ENCODE measurements at regions of chr12 and their contacts with region 1.

Region 1: GRCh38 chr12:122421821-122422729 is at the start of gene CLIP1:
- DNase-seq: peak; percentile 80 to 92
- ATAC-seq: peak; percentile 79 to 84 (median 82)
- H3K4me3 ChIP-seq: peak within 1 kb of the TSS; percentile 75
- H3K27ac ChIP-seq: peak within 1 kb of the TSS; percentile 97
- H3K4me1 ChIP-seq: peaks cover 34% of the 10 kb centered on the region
- H3K27me3 ChIP-seq: no peaks in the 10 kb centered on the region
- CTCF ChIP-seq: peak; percentile 47
- total RNA-seq, gene CLIP1: 458 to 639 (median 574) TPM

Region 2: DNA sequence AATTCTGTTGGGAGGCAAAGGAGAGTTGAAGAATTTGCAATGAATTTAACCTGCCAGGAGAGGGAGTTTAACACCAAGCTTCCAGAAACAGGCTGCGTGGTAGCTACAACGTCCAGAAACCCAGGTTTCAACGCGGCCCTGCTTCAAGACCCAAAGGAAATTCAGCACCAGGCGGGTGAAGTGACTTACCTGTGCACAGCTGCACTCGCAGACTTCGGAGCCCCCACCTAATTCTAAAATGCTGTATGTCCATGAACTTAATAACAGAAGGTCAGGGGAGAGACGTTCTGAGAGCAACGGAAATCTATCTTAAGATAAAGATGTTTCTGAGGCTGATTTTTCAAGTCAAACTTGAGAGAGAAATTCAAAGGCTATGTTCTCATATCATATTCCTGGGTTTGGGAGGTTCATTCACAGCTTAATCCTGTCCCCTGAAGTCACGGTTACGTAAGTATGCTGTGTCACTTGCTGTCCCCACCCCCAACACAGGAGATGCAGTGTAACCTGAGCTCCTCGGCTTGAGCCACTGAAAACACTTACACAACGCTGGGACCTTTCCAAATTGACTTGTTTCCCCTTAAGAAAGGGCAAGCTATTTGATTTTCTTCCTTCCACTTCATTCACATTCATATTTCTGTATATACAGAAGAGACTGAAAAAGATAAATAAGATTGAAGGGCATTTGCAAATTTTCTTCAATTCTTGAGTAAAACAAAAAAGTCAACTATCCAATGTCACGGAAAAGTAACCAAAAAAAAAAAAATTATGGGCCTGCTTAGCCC is 22.3 kb before region 1 on chr12:
- intact Hi-C with region 1: loop called (anchors 1 to 2 kb)
- DNase-seq: peak; percentile 77 to 88
- ATAC-seq: peak; percentile 83 to 90 (median 85)
- H3K4me3 ChIP-seq: peak overlapping the region; percentile 71
- H3K27ac ChIP-seq: peak overlapping the region; percentile 94
- H3K4me1 ChIP-seq: peaks cover 57% of the 10 kb centered on the region
- H3K27me3 ChIP-seq: no peaks in the 10 kb centered on the region
- CTCF ChIP-seq: peak; percentile 63

Region 3: DNA sequence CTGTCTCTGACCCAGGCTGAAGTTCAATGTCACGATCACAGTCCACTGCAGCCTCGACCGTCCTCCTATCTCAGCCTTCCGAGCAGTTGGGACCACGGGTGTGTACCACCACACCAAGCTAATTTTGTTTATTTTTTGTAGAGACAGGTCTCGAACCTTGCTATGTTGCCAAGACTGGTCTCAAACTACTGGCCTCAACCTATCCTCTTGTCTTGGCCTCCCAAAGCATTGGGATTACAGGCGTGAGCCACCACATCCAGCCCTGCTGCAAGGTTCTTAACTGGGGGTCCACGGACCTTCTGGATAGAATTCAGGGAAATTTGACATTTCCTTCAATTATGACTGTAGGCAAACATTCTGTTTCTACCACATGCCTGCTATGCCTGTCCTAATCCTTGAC is 41.7 kb after region 1 on chr12:
- intact Hi-C with region 1: loop called in 1 of 2 experiments (anchors 5 kb)
- DNase-seq: no peak
- ATAC-seq: peak in 2 of 4 donors; percentile 9 to 15
- H3K4me3 ChIP-seq: no peak overlapping the region
- H3K27ac ChIP-seq: peak overlapping the region; percentile 46
- H3K4me1 ChIP-seq: peaks cover 5% of the 10 kb centered on the region
- H3K27me3 ChIP-seq: no peaks in the 10 kb centered on the region
- CTCF ChIP-seq: no peak

Region 4: DNA sequence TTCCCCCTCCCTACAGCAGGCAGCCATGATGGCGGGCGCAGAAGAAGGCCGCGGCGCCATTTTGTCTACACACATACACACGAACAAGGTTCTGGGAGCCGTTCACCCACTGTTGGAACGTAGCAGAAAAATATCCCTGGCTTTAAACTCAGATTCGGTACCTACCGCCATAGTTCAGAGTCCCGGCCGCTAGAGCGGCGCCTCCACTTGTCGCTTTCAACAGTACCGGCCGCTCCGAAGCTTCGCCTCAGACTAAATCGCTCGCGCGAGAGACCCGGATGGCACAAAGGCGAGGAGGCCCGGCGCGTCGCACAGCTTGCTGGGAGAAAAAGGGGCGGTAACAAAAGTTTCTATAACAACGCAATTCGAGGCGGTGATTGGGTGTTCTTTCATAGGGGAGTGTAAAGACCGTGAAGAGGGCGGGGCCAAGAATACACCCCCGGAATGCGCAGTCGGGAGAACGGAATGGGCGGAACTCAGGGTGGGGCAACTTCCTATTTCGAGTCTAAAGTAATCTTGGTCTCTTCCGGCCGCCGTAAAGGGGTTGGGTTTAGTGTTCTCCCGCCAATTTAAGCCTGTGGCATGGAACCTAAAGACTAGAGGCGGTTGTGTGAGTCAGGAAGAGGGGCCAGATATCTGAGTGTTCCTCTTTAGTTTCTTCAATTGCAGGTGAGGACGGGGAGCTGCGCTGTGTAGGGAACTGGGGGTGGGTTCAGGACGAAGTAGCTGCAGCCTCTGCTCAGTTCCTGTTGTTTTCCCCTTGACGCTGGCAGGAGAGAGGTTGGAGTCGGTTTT is 104.8 kb after region 1 on chr12 and contains the starts of genes KNTC1 and RSRC2:
- intact Hi-C with region 1: no loop called
- DNase-seq: peak; percentile 95 to 98
- ATAC-seq: peak; percentile 93 to 98 (median 97)
- H3K4me3 ChIP-seq: peak within 1 kb of the TSS; percentile 85
- H3K27ac ChIP-seq: peak within 1 kb of the TSS; percentile 98
- H3K4me1 ChIP-seq: peaks cover 48% of the 10 kb centered on the region
- H3K27me3 ChIP-seq: no peaks in the 10 kb centered on the region
- CTCF ChIP-seq: no peak
- total RNA-seq, gene KNTC1: 1.5 to 2.5 (median 2.2) TPM
- total RNA-seq, gene RSRC2: 44.0 to 64.6 (median 53.3) TPM

Measured in psoas muscle (tissue), 8 donors.